AG04450 (cell line): ENCODE measurements at regions of chr7 and their contacts with region 1.

Region 1: DNA sequence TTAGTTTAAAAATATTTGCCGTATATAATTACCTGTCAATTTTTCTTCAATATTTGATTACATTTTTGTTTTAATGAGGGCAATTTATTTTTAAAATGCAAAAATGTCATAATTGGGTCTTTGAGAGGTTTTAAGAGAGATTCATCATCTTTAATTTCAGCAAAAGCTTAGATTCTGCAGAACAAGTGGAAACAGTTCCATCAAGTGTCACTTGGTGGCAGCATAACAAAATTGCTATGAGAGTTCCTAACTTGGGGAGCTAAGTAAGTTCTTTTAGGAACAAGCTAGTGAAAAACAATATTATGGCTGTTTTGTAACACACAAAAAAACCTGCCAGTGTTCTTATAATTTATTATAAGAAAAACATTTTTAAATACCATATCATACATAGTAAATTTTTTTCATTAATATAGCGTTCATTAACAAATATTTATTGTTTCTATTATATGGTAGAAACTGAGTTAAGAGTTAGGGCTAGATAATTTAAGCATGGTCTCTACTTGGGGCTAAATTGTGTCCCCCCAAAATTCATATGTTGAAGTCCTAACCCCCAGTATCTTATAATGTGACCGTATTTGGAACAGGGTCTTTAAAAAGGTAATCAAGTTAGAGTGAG is 155.2 kb downstream of the MAGI2 start:
- DNase-seq: peak; percentile 45
- H3K4me3 ChIP-seq: no peak overlapping the region
- H3K27ac ChIP-seq: no peak overlapping the region
- H3K27me3 ChIP-seq: no peaks in the 10 kb centered on the region
- CTCF ChIP-seq: peak; percentile 82

Region 2: DNA sequence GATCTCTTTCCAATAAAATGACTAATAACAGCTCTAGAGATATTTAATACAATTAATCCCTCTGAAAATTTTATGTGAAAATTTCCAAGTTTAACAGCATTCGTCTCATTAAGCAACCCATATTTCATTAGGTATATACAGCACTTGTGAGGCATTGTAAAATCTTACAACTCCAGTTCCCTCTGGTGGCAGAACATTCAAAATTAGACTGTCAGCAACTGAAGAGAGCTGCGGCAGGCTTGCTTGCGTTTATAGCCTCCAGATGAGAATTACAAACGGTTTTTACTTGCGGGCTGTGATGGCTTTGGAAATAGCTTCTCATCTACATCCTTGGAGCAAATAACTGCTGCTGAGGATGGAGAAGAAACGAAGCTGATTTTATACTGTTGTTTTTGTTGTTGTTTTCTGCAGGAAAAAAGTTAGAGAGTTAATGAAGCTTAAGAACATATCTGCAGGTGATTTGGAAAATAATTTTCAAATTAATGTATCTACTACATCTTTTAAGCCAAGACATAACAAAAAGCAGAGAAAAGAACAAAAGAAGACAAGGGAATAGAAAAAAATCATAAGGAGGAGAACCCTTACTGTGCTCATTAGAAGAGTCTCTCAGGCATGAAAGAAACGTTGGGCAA is 16.1 kb before region 1 on chr7:
- CTCF ChIA-PET with region 1: interaction called, 23 read pairs
- POLR2A ChIA-PET with region 1: interaction called, 6 read pairs
- DNase-seq: peak; percentile 39
- H3K4me3 ChIP-seq: peak overlapping the region; percentile 8; the same call in 1 of the 2 replicates
- H3K27ac ChIP-seq: peak overlapping the region; percentile 69
- H3K27me3 ChIP-seq: no peaks in the 10 kb centered on the region
- CTCF ChIP-seq: peak; percentile 62

Region 3: DNA sequence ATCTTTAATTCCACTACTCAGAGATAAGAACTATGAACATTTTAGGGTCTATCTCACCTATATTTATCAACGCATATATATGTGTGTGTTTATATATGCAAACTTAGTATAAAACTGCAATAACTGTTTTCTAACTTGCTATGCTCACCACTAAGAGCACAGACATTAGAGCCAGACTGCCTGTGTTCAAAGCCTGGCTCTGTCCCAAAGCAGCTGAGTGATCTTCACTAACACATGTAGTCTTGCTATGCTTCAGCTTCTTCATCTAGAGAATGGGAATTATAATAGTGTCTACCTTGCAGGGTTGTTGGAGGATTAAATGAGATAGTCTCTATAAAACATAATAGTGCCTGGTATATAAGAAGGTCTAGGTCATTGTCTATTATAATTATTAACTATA is 10.3 kb before region 1 on chr7:
- CTCF ChIA-PET with region 1: interaction called, 23 read pairs
- POLR2A ChIA-PET with region 1: interaction called, 6 read pairs
- DNase-seq: no peak
- H3K4me3 ChIP-seq: no peak overlapping the region
- H3K27ac ChIP-seq: no peak overlapping the region
- H3K27me3 ChIP-seq: no peaks in the 10 kb centered on the region
- CTCF ChIP-seq: no peak

Region 4: DNA sequence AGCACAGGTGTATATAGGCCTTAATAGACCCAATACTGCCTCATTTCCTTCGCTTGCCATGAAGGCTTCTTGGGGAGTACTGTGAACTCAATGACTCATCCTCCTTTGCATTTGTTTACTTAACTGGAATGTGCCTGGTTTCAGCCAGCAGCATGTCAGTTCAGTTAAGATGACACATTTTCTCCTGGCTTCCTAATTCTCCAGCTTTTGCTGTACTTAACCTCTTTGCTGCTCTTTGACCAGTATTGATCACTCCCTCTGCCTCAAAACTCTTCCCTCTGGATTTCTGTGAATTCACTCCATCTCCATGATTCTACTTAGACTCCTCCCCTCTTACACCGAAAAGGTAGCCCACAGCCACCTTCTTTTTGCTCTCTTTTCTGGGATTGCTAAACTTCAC is 19.5 kb after region 1 on chr7:
- CTCF ChIA-PET with region 1: interaction called, 11 read pairs
- POLR2A ChIA-PET with region 1: no interaction called
- DNase-seq: peak; percentile 70
- H3K4me3 ChIP-seq: no peak overlapping the region
- H3K27ac ChIP-seq: no peak overlapping the region
- H3K27me3 ChIP-seq: no peaks in the 10 kb centered on the region
- CTCF ChIP-seq: no peak

Region 5: DNA sequence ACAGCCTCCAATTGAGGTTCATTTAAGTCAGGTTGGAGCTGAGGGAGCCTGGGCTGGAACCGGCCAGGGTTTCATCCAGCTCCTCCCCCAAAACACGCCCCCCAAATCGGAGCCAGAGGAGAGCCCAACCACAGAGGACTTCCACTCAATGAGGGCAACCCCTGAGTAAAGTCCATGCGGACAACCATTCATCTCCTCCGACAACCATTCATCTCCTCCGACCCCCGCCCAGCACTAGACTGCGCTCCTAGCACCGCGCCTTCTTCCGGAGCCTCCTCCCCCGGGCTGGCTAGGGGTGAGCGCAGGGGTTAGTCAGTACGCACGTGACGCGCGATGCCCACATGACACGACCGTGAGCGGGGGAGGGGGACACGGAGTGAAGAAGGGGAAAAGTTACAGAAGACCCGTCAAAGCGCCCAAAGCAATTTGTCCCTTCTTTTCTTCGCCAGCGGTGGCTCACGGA is 153.8 kb after region 1 on chr7:
- CTCF ChIA-PET with region 1: interaction called, 10 read pairs
- POLR2A ChIA-PET with region 1: no interaction called
- DNase-seq: peak; percentile 53
- H3K4me3 ChIP-seq: peak overlapping the region; percentile 80
- H3K27ac ChIP-seq: peak overlapping the region; percentile 97
- H3K27me3 ChIP-seq: no peaks in the 10 kb centered on the region
- CTCF ChIP-seq: no peak

Region 6: DNA sequence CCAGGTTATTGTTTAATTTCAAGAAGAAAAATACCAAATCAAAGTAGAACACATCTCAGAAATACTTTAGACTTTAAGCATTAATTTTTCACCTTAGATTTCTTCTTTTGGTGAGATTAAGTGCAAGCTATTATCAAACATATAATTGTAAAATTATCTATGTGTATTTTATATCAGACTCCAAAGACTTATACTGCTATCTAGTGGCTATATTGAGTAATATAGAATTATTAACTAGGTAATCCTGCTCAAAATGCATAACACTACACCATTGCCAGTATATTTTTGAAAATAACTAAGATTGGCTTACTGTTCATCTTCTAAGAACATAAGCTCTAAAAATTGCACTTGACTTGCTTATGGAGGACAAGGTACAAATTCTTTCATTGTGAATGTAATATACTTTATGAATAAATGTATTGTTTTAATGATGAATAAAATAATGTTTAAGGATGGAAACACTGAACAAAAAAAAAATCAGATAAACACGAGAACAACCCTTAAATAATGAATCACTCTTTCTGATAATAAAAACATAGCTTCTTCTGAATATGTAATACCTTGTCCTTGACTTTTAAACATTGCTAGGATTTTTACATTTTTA is 749.7 kb after region 1 on chr7:
- CTCF ChIA-PET with region 1: interaction called, 50 read pairs
- POLR2A ChIA-PET with region 1: no interaction called
- DNase-seq: no peak
- H3K4me3 ChIP-seq: no peak overlapping the region
- H3K27ac ChIP-seq: no peak overlapping the region
- H3K27me3 ChIP-seq: no peaks in the 10 kb centered on the region
- CTCF ChIP-seq: peak; percentile 50